ENCODE measurements at regions of chr22 and their contacts with region 1.

Region 1: DNA sequence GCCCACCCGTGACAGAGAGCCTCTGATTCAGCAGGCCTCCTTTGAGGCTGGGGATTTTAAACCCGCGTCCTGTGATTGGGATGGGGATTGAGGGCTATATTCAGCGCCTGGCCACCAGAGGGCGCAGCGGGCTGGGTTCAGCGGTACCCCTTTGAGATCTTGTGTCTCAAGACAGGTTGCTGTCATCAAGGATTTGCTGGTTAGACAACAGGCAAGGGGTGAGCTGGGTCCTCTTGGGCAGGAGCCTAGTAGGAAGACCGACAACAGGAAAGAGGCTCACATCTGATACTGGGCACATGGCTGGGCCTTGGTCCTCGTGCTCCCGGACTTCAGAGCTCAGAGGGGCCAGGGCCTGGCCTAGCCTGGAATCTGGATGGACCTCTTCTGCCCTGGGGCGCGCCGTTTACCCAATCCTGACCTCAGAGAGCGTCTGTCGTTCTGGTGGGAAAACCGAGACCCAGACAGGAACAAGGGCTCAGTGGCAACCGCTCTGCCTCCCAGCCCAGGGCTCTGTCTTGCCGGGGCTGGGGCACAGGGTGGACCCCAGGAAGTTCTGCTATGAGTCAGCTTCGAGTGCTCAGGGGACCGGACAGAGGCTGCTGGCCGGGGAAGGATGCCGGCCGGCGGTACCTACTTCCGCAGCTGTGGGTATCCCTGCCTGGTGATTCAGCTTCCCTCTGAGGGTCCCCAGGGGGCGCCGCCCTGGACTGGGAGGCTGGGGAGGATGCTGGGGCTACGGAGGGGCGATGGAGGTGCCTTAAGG is 929 bp upstream of the SLC35E4 start:
- DNase-seq: peak; percentile 65 to 92
- H3K4me3 ChIP-seq: peak overlapping the region; percentile 70 to 90
- H3K27ac ChIP-seq: peak overlapping the region; percentile 97 to 98
- H3K4me1 ChIP-seq: peaks cover 21 to 32% of the 10 kb centered on the region in 2 donors
- H3K27me3 ChIP-seq: no peaks in the 10 kb centered on the region
- CTCF ChIP-seq: peak; percentile 93 to 95 (median 95)

Region 2: GRCh38 chr22:30574997-30575671 is 59.5 kb before region 1 on chr22:
- intact Hi-C with region 1: no loop called
- DNase-seq: peak; percentile 19 to 81
- H3K4me3 ChIP-seq: peak overlapping the region; percentile 4 to 66
- H3K27ac ChIP-seq: peak overlapping the region; percentile 50 to 74
- H3K4me1 ChIP-seq: peaks cover 4 to 11% of the 10 kb centered on the region in 2 donors
- H3K27me3 ChIP-seq: no peaks in the 10 kb centered on the region
- CTCF ChIP-seq: peak in 1 of 3 experiments; percentile 21

Region 3: DNA sequence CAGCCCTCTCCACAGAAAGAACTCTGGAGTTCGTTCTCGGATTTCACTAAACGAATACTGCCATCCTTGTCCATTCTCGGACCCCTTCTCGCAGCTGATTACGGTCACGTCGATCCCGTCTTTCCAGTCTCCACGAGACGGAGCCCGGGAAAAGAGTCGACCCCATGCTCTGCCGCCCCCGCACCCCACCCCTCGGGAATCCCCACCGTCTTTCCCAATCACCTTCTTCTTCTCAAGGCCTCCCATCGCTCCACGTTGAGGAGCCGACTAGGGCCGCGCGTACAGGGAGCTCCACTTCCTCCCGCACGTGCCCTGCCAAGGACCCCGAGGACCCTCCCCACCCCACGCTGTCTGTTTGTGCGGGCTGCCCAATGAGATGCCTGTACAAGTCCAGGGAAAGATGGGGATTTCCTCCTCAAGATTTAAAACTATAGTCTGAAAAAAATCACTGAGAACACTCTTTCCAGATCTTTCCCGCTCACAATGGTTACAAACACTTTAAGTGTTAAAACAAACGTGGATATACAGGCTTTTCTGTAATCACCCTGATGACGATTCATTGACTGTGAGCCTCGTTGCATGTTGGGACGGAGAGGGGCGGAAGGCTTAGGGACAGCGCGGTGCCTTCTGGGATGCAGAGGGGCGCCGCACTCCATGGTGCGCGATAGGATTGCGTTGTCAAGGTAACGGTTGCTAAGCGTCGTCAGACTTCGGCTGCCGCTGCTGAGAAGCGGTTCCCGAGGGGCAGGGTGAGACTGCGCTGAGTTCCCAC is 42.9 kb before region 1 on chr22 and contains the start of gene PES1:
- intact Hi-C with region 1: loop called (anchors 1 kb)
- DNase-seq: peak; percentile 81 to 98
- H3K4me3 ChIP-seq: peak within 1 kb of the TSS; percentile 59 to 85
- H3K27ac ChIP-seq: peak within 1 kb of the TSS; percentile 73 to 81
- H3K4me1 ChIP-seq: peaks cover 6 to 15% of the 10 kb centered on the region in 2 donors
- H3K27me3 ChIP-seq: no peaks in the 10 kb centered on the region
- CTCF ChIP-seq: no peak
- total RNA-seq, gene PES1: 24.7 TPM

Region 4: GRCh38 chr22:30650508-30651116 is 16.0 kb after region 1 on chr22:
- intact Hi-C with region 1: no loop called
- DNase-seq: no peak
- H3K4me3 ChIP-seq: no peak overlapping the region
- H3K27ac ChIP-seq: no peak overlapping the region
- H3K4me1 ChIP-seq: no peaks in the 10 kb centered on the region
- H3K27me3 ChIP-seq: no peaks in the 10 kb centered on the region
- CTCF ChIP-seq: no peak

Region 5: GRCh38 chr22:30667494-30668385 is 33.1 kb after region 1 on chr22 and contains the start of gene DUSP18:
- intact Hi-C with region 1: loop called (anchors 1 kb)
- DNase-seq: peak; percentile 73 to 96
- H3K4me3 ChIP-seq: peak within 1 kb of the TSS; percentile 64 to 80
- H3K27ac ChIP-seq: peak within 1 kb of the TSS in 1 of 2 donors; percentile 1
- H3K4me1 ChIP-seq: peaks cover 4% of the 10 kb centered on the region in 2 donors
- H3K27me3 ChIP-seq: no peaks in the 10 kb centered on the region
- CTCF ChIP-seq: peak in 2 of 3 experiments; percentile 28 to 40
- total RNA-seq, gene DUSP18: 0.21 TPM

Region 6: GRCh38 chr22:30754971-30755756 is 120.5 kb after region 1 on chr22:
- intact Hi-C with region 1: loop called (anchors 1 kb)
- DNase-seq: no peak
- H3K4me3 ChIP-seq: no peak overlapping the region
- H3K27ac ChIP-seq: no peak overlapping the region
- H3K4me1 ChIP-seq: no peaks in the 10 kb centered on the region
- H3K27me3 ChIP-seq: no peaks in the 10 kb centered on the region
- CTCF ChIP-seq: peak; percentile 26 to 50 (median 47)

Region 7: DNA sequence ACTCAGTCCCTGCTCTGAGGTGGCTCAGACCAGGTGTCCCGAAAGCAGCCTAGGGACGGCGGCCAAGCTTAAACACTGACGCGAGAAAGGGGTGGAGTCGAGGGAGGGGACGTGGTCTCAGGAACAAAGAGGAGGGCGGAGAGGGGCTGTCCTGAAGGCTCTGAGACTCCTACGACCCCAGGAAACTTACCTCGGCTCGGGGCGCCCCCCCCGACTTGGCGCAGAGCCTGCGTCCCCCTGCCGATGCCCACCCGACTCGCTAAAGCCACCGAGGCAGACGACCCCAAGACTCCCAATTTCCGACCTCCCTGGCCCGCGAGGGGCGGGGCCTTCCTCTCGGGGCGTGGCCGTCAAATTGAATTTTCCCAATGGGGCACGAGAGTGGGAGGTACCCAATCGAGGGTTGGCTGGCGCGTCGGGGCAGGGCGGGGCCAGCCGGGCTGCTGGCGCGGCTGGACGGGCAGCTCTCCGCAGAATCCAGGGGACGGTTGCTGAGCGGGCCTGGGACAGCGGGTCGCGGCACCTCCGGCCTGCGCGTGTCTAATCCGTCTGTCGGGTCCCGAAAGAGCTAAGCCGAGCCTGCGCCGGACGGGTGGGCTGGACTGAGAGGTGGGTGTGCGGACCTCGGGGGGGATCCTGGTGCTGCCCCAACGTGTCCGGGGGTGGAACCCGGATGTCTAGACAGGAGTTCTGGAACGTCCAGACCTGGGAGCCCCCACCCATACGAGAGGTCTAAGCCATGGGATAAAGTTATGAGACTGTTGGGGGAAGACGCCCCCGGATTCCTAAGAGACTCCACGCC is 446.4 kb after region 1 on chr22 and contains the start of gene SMTN:
- intact Hi-C with region 1: loop called (anchors 10 kb)
- DNase-seq: peak; percentile 63 to 96
- H3K4me3 ChIP-seq: peak within 1 kb of the TSS; percentile 70 to 89
- H3K27ac ChIP-seq: peak within 1 kb of the TSS; percentile 98
- H3K4me1 ChIP-seq: peaks cover 10 to 26% of the 10 kb centered on the region in 2 donors
- H3K27me3 ChIP-seq: no peaks in the 10 kb centered on the region
- CTCF ChIP-seq: no peak
- total RNA-seq, gene SMTN: 671 TPM

Measured in ascending aorta (tissue), 2 donors.